Mucosa of descending colon (tissue), 3 donors: ENCODE measurements at regions of chr12 and their contacts with region 1.

Region 1: DNA sequence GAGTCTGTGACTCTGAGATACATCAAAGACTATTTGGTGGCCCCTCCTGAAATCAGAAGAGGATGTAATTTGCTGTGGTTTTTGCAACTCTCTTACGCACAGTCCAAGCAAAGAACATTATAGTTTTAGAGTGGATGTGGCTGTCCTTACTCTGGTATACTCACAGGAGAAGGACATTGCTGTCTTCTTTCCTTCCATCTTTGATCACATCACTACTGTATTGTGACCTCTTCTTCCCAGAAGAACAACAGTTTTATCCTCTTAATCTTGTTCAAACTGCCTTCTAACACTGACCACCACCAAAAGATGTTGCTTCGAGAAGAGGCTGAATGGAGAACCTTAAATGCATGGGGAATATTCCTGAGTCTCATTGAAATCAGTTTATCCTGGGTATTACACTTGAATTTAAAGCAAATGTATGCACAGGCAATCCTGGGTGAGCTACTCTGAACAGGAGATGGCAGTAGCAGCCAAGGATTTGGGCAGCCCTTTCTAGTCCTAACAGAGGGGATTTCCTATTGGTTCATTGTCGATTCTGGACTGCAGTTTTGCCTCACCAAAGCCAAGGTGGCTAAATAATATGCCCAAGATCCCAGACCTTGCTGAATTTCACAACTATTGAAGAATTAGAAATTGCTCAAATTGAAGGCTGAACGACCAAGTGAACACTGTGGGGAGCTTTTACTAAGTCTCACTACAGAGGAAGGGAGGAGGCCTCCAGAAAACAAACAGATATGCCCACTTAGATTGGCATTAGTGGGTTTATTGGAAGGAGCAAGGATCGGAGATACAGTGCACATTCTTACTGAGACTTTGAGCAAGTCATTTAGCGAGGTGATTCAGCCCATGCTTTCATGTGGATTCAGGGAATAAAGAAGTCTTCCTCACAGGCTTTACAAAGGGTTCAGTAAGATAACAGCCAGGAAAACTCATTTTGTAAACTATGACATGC is 282.8 kb downstream of the PAWR start:
- DNase-seq: peak in 2 of 3 donors; percentile 57 to 79
- ATAC-seq: peak; percentile 96
- H3K4me3 ChIP-seq: no peak overlapping the region
- H3K4me1 ChIP-seq: no peaks in the 10 kb centered on the region
- CTCF ChIP-seq: peak; percentile 45

Region 2: DNA sequence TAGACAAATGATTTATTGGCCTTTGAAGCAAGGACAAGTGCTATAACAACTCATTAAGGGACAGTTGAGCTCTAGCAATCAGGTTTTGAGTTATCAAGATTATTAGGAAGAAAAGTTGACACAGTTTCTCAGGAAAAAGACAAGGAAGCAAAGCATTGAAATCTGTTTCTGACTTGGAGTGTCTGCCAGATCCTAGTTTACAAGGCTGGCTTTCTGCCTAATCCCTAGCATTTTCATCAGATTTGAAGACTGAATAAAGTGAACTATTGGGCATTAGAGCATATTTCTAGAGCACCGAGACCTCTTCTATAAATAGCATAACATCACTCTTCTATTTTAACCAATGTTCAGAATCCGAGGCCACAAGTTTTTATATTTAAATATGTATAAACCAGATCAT is 536.4 kb before region 1 on chr12:
- intact Hi-C with region 1: no loop called
- DNase-seq: no peak
- ATAC-seq: no peak
- H3K4me3 ChIP-seq: no peak overlapping the region
- H3K4me1 ChIP-seq: no peaks in the 10 kb centered on the region
- CTCF ChIP-seq: no peak

Region 3: DNA sequence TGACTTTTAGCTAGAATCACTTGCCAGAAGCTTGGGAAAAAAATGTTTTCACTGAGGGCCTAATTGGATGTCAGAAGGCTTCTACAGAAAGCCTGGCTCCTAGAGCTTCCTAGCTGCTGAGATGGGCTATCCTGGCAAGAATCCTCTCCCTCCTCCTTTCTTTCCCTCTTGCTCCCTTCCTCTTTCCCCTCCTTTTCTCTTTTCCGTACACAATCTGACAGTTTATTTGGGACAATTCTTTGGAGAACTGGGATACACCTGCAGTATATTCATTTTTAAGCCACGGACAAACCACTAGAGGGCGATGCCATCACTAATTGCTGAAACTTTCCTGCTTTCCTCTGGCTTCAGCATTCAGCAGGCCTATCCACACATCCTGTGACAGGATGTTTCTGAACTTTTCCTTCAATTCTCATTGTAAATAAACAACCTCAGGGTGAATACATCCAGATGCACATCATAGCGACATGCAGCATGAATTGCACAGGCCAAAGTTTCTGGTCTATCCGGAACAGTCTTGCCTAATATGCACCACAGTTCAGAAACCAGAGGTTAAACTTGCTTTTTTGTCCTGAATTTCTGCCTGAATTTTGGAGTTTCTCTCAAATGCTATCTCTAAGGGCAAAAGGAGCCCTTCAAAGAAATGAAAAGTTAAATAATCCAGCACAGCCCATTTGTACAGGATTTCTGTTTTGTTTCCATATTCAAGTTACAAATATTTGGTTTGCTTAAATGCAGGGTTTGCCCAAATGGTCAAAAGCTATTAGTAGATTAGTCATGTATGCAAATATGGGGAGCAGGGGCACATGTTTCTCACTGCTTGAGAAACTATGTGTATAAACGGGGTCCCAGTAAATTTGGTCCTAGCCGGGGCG is 140.0 kb after region 1 on chr12:
- intact Hi-C with region 1: loop called in 1 of 2 experiments (anchors 5 kb)
- DNase-seq: peak in 1 of 3 donors; percentile 75
- ATAC-seq: peak; percentile 87
- H3K4me3 ChIP-seq: no peak overlapping the region
- H3K4me1 ChIP-seq: peaks cover 11% of the 10 kb centered on the region
- CTCF ChIP-seq: peak; percentile 20